Right ventricle myocardium superior (tissue), 1 donor: ENCODE measurements at regions of chr1 and their contacts with region 1.

Region 1: DNA sequence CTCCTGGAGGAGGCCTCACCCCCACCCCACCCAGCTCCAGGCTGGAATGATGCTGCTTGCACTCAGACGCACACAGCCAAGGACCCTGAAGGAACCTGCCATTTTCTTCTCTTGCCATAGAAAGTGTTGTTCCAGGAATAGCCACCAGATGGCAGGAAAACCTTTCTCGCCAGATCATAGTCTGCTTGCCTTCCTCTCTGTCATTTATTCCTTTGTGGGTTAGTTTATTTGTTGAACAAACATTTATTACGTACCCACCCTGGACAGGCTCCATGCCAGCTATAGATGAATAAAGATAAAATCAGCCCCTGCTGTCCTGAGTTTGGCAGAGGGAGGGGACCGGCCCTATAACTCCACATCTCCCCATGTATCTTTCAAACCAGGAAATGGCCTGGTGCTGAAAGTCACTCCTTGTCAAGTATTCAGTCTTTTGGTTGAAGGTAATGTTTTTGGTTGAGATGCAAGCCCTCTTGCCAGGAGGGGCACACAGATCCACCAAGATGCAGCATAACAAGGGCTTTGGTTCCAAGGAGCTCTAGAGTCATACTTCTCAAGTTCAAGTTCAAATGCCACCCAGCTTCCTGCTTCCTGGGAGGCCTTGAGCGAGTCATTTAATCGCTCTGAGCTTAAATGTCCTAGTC is 7.0 kb upstream of the KCNC4 start:
- DNase-seq: no peak
- ATAC-seq: peak; percentile 69

Region 2: DNA sequence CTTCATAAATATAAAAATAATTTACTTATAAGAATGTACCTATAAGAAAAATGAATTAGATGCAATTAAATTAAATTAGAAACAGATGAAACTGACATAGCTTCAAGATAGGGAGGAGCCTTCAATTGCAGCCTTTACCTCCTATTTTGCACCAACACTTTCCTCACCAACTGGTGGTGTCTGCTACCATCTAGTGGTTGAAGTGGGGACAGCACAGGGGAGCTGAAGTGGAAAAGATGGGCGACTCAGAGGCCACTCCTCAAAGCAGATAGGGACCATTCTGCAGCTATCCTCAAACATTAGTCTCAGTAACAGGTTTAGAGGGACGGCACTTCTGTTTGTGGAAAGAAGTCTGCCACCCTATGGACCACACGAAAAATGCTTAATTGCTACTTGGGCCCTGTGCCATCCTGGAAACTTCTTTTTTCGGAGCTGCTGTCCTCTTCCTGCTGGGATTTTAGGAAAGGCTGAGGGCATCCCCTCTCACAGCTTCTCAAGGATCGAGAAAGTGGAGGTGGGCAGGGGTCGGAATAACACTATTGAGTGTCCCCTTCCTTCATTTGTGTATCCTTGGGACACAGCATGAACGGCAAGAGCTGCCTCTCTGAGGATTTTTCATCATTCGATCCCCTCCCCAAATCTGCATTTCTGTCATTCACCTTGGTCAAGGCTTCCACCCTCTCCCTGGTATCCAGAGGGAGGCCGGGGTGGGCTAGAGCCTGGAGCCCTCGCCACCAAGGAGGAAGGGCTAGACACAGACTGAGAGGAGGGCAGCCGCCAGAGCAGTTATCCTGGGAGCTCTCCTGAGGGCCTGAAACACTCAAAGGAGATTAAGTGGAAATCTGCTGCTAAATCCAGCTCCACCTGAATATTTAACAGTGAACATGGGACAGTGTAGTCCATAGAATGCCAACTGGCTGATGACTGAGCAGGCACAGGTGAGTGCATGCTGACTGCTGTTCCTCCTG is 257.4 kb after region 1 on chr1:
- intact Hi-C with region 1: loop called (anchors 2 kb)
- DNase-seq: peak; percentile 74
- ATAC-seq: peak; percentile 88